Sigmoid colon (tissue), 7 donors: ENCODE measurements at regions of chr3 and their contacts with region 1.

Region 1: DNA sequence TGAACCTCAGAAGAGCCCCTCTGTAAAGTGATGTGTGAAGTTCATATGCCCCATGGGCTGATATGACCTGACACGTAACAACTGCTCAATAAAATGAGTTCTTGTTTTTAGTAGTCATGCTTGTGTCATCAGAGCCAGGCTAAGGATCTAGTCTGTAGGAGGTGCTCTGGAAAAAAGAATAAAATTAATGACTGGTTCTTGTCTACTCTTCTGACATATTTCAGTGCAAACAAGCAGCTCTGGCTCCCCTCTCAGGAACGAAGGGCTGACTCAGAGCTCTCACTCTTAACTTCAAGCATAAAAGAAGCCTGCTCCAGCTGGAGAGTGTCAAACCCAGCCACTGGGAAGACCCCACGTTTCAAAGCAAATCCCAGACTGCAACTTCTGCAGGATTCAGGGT is 77.0 kb downstream of the LRIG1 start:
- DNase-seq: peak; percentile 88
- H3K4me3 ChIP-seq: no peak overlapping the region
- H3K27ac ChIP-seq: peak overlapping the region; percentile 65 to 95 (median 86)
- H3K4me1 ChIP-seq: peaks cover 0 to 95% (median 86%) of the 10 kb centered on the region in 4 donors
- H3K27me3 ChIP-seq: no peaks in the 10 kb centered on the region
- CTCF ChIP-seq: no peak
- EP300 ChIP-seq: peak in 3 of 4 donors; percentile 11 to 72 (median 50)
- POLR2A ChIP-seq: no peak

Region 2: DNA sequence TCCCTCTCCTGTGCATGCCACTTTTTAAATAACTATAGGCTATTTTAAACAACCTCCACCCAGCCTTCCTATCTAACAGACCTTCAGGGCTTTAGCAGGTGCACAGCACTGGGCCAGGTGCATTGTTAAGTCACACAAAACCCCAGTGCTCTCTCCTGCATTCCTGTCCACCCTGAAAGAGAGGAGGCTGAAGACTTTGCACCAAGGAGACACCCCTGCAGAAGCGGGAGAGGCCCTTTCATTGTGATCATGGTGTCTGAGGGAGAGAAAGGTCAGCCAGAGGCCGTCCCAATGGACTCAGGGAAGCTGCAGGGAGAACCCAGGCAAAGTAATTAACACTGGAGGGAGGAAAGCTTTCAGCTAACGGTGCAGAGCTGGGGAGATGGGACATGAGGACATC is 71.9 kb after region 1 on chr3:
- intact Hi-C with region 1: loop called (anchors 2 kb)
- DNase-seq: no peak
- H3K4me3 ChIP-seq: peak overlapping the region in 3 of 4 donors; percentile 7 to 99 (median 90)
- H3K27ac ChIP-seq: peak overlapping the region; percentile 90 to 97 (median 94)
- H3K4me1 ChIP-seq: peaks cover 2 to 75% (median 70%) of the 10 kb centered on the region in 4 donors
- H3K27me3 ChIP-seq: no peaks in the 10 kb centered on the region
- CTCF ChIP-seq: no peak
- EP300 ChIP-seq: no peak
- POLR2A ChIP-seq: no peak